Panc1 (cell line): ENCODE measurements at regions of chr2 and their contacts with region 1.

Region 1: GRCh38 chr2:38343212-38343611 is 33.9 kb downstream of the ATL2 start:
- DNase-seq: no peak
- ATAC-seq: no peak
- H3K4me3 ChIP-seq: no peak overlapping the region
- H3K27ac ChIP-seq: no peak overlapping the region
- H3K4me1 ChIP-seq: no peaks in the 10 kb centered on the region
- H3K27me3 ChIP-seq: no peaks in the 10 kb centered on the region
- CTCF ChIP-seq: no peak

Region 2: DNA sequence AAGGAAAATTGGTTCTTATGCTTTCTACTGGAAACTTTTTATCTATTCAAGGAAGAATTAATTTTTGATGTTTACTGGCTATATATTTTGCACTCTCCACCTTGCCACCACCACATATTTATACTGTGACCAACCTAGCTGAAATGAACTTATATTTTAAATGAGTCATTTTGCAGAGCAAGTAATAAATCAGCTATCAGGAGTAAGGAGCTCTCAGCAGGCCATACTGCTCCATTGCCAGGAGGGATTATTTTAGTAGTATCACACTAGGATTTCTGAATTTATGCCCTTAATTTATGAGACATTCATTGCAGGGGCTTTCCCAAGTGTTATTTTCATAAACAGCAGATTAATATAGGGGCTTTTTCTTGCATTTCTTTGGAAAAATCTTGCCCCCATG is 141.4 kb before region 1 on chr2:
- CTCF ChIA-PET with region 1: interaction called, 14 read pairs
- POLR2A ChIA-PET with region 1: no interaction called
- in situ Hi-C with region 1: no loop called
- intact Hi-C with region 1: no loop called
- DNase-seq: no peak
- ATAC-seq: no peak
- H3K4me3 ChIP-seq: no peak overlapping the region
- H3K27ac ChIP-seq: no peak overlapping the region
- H3K4me1 ChIP-seq: no peaks in the 10 kb centered on the region
- H3K27me3 ChIP-seq: no peaks in the 10 kb centered on the region
- CTCF ChIP-seq: no peak

Region 3: GRCh38 chr2:39377226-39377939 is 1034.2 kb after region 1 on chr2:
- CTCF ChIA-PET with region 1: no interaction called
- POLR2A ChIA-PET with region 1: no interaction called
- in situ Hi-C with region 1: no loop called
- intact Hi-C with region 1: no loop called
- DNase-seq: no peak
- ATAC-seq: no peak
- H3K4me3 ChIP-seq: no peak overlapping the region
- H3K27ac ChIP-seq: no peak overlapping the region
- H3K4me1 ChIP-seq: peaks cover 19% of the 10 kb centered on the region; the same call in 1 of the 2 replicates
- H3K27me3 ChIP-seq: no peaks in the 10 kb centered on the region
- CTCF ChIP-seq: no peak